ENCODE measurements at regions of chr6 and their contacts with region 1.

Region 1: GRCh38 chr6:15264902-15265761 is 19.3 kb downstream of the JARID2 start:
- DNase-seq: peak in 4 of 5 donors; percentile 42 to 79 (median 46)
- ATAC-seq: peak; percentile 65 to 82 (median 72)
- H3K4me3 ChIP-seq: peak overlapping the region in 2 of 12 donors; percentile 5 to 17
- H3K27ac ChIP-seq: peak overlapping the region in 11 of 12 donors; percentile 31 to 74 (median 58)
- H3K4me1 ChIP-seq: peaks cover 26 to 84% (median 72%) of the 10 kb centered on the region in 12 donors
- H3K27me3 ChIP-seq: no peaks in the 10 kb centered on the region
- CTCF ChIP-seq: no peak
- POLR2A ChIP-seq: no peak

Region 2: GRCh38 chr6:15351631-15352030 is 86.5 kb after region 1 on chr6:
- intact Hi-C with region 1: loop called in 1 of 10 experiments (anchors 10 kb)
- DNase-seq: peak in 4 of 5 donors; percentile 34 to 75 (median 49)
- ATAC-seq: peak in 3 of 4 donors; percentile 83 to 95 (median 94)
- H3K4me3 ChIP-seq: no peak overlapping the region
- H3K27ac ChIP-seq: no peak overlapping the region
- H3K4me1 ChIP-seq: peaks cover 0 to 83% (median 24%) of the 10 kb centered on the region in 12 donors
- H3K27me3 ChIP-seq: no peaks in the 10 kb centered on the region
- CTCF ChIP-seq: no peak
- POLR2A ChIP-seq: no peak

Region 3: DNA sequence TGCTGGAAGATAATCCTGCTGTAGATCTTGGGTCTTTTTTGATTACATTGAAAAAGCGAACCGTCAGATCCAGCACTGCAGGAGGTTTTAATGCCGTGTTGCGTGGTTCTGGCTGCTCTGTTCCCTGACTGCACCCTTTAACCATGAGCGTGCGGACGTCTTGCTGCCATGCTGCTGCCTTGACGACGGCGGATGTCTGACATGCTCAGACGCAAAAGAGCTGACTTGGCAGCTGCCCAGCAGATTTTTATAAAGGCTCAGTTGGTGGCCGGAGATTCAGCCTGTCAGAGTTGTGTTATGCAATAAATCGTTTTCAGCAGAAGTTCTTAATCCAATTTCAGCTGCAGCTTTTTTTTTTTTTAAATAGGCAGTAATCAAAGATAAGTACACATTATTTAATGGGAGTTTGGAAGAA is 100.1 kb after region 1 on chr6:
- intact Hi-C with region 1: loop called in 2 of 10 experiments (anchors 10 kb)
- DNase-seq: peak; percentile 83 to 92 (median 87)
- ATAC-seq: peak; percentile 52 to 93 (median 90)
- H3K4me3 ChIP-seq: peak overlapping the region in 2 of 12 donors; percentile 9 to 19
- H3K27ac ChIP-seq: peak overlapping the region in 1 of 12 donors; percentile 11
- H3K4me1 ChIP-seq: peaks cover 6 to 78% (median 49%) of the 10 kb centered on the region in 12 donors
- H3K27me3 ChIP-seq: no peaks in the 10 kb centered on the region
- CTCF ChIP-seq: no peak
- POLR2A ChIP-seq: no peak